Right ventricle myocardium superior (tissue), 1 donor: ENCODE measurements at regions of chr10 and their contacts with region 1.

Region 1: DNA sequence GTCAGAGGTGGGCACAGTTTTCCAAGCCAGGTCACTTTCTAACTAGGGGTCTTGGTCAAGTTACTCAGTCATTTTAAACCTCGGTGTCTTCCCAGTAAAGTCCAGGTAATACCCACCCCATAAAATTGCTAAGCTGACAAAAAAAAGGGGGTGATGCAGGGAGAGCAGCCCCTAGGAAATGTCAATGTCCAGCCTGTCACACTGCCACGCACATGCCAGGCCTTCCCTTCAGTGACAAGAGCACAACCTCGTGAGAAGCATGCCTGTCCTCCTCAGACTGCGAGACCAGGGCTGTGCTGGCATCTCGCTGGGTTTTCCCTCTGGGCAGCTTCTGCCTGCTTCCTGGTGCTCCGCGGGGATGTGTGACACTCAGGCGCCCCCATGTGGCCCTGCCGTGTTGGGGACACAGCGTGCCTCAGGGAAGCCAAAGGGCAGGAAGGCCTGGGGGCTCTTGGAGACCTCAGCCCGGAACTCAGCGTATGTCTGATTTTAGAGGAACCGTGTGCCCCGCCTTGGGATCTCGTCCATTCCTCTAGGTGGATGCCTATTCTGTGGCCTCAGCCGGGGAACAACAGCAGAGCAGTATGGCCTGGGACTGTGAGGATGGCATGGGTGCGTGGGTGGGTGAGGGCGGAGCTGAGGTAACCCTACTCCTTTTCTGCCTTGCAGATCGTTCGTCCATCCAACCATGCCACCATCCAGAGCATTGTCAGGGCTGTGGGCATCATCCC is 10.2 kb upstream of the GDF2 start:
- DNase-seq: peak; percentile 90
- ATAC-seq: peak; percentile 98

Region 2: DNA sequence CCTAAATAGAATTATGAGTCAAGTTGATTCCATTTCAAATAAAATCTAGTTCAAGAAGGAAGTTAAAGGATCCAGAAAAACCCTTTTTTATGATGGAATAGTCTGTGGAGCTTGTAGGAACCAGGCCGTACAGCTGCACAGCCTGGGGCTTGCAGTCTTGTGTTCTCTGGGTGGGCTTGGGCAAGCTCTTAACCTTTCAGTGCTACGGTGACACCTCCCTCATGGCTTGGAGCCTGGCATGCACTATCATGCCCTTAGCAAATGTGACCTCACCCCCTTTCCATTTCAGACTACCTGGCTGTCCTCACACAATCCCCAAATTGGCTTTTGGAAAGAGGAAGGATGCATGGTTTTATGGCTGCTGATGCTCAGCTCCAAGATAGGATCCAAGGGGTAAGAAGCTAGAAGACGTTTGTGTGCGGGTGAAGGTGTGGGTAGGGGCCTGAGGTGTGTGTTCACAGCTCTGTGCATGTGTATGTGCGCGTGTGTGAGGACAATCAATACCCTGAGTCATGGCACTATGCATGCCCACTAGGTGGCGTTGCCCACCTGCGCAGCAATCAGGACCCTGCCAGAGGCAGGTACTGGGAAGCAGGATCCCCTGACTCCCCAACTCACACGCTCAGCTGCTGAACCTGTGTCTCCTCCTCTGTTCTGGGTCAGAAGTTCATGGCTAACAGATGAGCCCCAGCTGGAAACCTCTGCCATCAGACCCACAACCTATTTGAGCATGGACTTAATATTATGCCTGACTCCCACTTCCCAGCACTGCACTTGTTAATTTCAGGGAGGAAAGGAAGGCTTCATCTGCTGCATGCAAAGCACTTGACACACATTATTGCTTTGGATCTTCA is 287.5 kb before region 1 on chr10:
- intact Hi-C with region 1: loop called (anchors 5 kb)
- DNase-seq: peak; percentile 65
- ATAC-seq: peak; percentile 82

Region 3: DNA sequence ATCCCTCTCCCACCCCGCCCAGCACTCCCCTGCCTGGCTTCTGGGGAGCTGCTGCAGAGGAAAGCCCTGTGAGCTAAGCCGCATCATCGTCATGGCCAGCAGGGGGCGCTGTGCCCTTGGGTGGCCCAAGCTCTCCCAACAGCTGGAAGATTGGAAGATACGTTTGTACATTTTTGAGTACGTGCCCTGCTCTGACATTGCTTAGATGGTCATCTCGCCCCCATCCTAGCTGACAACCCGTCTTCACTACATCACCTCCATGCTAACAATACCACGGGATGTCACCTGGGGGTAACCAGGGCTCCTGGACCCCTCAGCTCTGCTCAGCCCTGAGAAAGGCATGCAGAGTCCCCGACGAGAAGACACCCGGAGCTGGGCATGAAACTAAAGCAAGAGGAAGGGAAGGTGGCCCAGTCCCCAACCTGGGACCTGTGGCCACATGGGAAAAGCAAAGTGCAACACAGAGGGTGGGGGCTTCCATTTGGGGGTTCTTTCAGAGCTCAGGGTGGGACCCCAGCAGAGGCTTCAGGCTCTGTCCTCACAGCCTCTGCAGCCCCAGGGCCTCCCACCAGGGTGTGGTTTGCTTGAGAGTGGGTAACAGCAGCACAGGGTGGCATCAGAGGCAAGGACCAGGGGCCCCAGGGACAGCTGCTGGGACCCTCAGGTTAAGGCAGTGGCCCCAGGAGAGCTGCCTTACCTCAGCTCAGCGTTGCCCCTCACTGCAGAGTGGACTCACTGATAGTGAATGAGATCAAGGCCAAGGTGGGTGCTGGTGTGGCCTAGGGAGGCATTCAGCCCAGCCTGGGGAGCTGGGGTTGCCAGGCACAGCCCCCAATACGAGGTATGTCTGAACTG is 264.2 kb before region 1 on chr10:
- intact Hi-C with region 1: loop called (anchors 2 kb)
- DNase-seq: peak; percentile 85
- ATAC-seq: peak; percentile 83

Region 4: GRCh38 chr10:47269294-47269693 is 42.8 kb before region 1 on chr10:
- intact Hi-C with region 1: no loop called
- DNase-seq: no peak
- ATAC-seq: no peak

Region 5: DNA sequence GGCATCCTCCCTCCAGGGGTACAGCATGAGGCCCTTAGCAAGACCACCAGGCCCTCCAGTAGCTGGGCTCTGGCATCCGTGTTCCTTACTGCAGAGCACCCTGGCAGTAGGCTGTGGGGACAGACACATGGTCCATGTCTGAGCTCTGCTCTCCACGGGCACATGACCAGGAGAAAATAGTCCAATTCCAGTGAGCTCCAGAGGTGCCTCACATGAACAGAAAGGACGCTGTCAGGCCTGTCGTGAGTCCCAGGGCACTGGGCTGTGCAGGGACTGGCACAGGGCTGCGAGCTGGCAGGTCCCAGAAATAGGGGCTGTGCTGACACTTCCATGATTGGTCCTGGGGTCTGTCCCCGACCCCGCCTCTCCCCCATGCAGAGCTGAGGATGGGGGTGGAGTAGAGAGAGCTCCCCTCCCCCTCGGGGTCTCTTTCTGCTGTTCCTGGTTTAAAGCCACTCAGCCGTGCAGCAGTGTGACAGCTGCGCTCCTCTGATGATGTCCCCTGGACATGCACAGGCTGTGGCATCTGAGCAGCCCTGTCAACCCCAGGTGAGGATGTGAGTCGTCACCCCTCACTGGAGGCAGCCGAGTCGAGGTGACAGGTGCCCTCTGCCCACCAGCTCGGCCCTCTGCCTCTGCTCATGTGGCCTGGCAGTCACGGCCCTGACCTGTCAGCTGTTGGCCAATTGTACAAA is 97.2 kb after region 1 on chr10:
- intact Hi-C with region 1: no loop called
- DNase-seq: no peak
- ATAC-seq: no peak

Region 6: GRCh38 chr10:47423476-47423875 is 111.4 kb after region 1 on chr10:
- intact Hi-C with region 1: no loop called
- DNase-seq: no peak
- ATAC-seq: no peak